KBM-7 (cell line): ENCODE measurements at regions of chr10 and their contacts with region 1.

Region 1: GRCh38 chr10:30591249-30591670 is 38.3 kb downstream of the LYZL2 start:
- DNase-seq: peak; percentile 64

Region 2: DNA sequence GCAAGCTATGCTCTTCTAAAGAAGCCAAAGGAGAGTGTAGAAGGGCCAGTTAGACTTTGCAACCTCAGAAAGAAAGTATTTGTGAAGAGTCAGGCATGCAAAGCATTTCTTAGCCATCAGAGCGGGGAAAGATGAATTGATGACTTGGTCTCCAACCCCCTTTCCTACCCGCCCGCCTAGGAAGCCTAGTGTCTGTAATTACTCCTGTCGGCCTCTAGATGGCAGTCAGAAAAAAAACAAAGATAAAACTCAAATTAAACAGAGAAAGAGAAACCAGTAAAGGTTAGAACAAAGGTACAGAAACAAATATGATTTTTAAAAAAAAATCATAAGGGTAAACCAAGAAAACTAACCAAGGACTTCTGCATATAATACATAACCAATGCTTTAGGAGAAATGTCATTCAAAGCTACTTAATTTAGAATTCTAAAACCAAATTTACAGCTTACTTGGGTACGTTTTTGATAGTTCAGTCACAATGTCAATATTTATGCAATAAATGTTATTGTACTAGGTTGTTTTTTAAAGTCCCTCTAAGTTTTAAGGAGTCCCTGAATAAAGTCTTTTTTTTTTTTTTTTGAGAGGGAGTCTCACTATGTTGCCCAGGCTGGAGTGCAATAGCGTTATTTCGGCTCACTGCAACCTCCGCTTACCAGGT is 1204.8 kb before region 1 on chr10:
- in situ Hi-C with region 1: loop called (anchors 5 kb)
- DNase-seq: peak; percentile 63

Region 3: DNA sequence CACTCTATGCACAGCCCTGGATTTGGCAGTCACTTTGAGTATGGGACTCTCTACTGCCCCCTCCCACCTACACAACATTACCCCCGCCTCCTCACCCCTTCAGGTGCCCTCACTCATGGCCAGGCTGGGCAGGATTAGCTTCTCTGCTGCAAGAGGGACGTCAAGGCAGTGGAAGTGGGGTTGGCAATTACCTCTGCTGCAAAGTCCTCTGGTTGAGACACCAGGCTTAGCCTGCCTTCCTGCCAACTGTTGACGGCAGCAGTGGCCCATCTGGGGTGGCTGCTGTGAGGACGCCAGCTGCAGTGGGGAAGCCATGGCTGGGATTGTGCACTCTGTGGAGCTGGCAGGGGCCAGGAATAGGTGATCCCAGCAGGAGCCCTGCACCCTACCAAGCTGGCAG is 983.2 kb before region 1 on chr10:
- in situ Hi-C with region 1: no loop called
- DNase-seq: no peak

Region 4: DNA sequence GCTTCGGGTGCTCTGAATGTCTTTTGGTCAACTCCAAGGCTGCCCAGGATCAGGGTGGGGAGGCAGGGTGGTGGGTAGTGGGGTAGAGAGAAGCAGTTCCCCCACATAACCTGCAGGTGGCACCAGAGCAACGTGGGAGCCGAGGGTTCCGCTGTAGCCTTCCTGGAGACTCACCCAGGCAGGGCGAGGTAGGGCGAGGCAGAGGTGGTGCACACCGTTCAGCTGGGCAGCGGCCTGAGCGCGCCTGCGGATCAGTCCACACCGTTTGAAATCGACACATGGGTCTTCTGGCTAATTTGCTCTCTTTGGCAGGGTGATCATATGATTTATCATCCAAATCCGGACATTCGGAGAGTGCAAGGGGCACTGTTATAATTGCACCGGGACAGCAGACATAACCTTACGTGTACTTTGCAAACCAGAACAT is 198.7 kb before region 1 on chr10:
- in situ Hi-C with region 1: loop called (anchors 25 kb)
- DNase-seq: peak; percentile 80